H1 (cell line): ENCODE measurements at regions of chr3 and their contacts with region 1.

Region 1: GRCh38 chr3:122969585-122970453 is 57.7 kb downstream of the SEMA5B start:
- DNase-seq: no peak
- H3K4me3 ChIP-seq: no peak overlapping the region
- H3K27ac ChIP-seq: no peak overlapping the region
- H3K4me1 ChIP-seq: peaks cover 0 to 14% (median 9%) of the 10 kb centered on the region in 4 experiments; a peak in 6 of 7 replicates
- H3K27me3 ChIP-seq: no peaks in the 10 kb centered on the region
- CTCF ChIP-seq: no peak
- EP300 ChIP-seq: no peak
- POLR2A ChIP-seq: no peak
- RAD21 ChIP-seq: no peak

Region 2: GRCh38 chr3:122784436-122784835 is 185.4 kb before region 1 on chr3:
- CTCF ChIA-PET with region 1: no interaction called
- POLR2A ChIA-PET with region 1: no interaction called
- DNase-seq: no peak
- H3K4me3 ChIP-seq: no peak overlapping the region
- H3K27ac ChIP-seq: no peak overlapping the region
- H3K4me1 ChIP-seq: no peaks in the 10 kb centered on the region
- H3K27me3 ChIP-seq: no peaks in the 10 kb centered on the region
- CTCF ChIP-seq: no peak
- EP300 ChIP-seq: no peak
- POLR2A ChIP-seq: no peak
- RAD21 ChIP-seq: no peak

Region 3: GRCh38 chr3:122936335-122936734 is 33.5 kb before region 1 on chr3:
- CTCF ChIA-PET with region 1: no interaction called
- POLR2A ChIA-PET with region 1: no interaction called
- DNase-seq: no peak
- H3K4me3 ChIP-seq: no peak overlapping the region
- H3K27ac ChIP-seq: no peak overlapping the region
- H3K4me1 ChIP-seq: no peaks in the 10 kb centered on the region; a peak in 1 of 7 replicates
- H3K27me3 ChIP-seq: no peaks in the 10 kb centered on the region
- CTCF ChIP-seq: no peak
- EP300 ChIP-seq: no peak
- POLR2A ChIP-seq: no peak
- RAD21 ChIP-seq: no peak

Region 4: DNA sequence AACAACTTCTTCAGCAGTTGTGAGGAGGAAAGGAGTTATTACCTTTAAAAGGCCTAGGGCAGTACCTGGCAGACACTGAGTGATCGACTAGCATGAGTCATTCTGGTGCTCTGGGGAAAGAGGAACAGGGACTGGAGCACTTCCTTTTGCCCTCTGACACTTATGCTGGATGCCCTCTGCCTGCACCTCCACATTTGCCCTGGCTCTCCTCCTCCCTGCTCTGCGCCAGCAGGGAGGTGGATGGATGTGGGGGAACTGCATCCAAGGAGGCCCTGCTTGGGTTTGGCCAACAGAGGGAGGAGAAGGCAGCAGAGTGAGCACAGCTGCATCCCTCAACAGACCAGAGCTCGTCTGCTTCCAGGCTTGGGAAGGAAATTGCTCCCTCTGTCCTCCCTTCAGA is 17.3 kb before region 1 on chr3:
- CTCF ChIA-PET with region 1: interaction called, 26 read pairs
- POLR2A ChIA-PET with region 1: interaction called, 6 read pairs
- DNase-seq: no peak
- H3K4me3 ChIP-seq: no peak overlapping the region
- H3K27ac ChIP-seq: no peak overlapping the region
- H3K4me1 ChIP-seq: peaks cover 0 to 20% (median 7%) of the 10 kb centered on the region in 4 experiments; a peak in 5 of 7 replicates
- H3K27me3 ChIP-seq: no peaks in the 10 kb centered on the region
- CTCF ChIP-seq: peak; percentile 45 to 50 (median 47)
- EP300 ChIP-seq: no peak
- POLR2A ChIP-seq: no peak
- RAD21 ChIP-seq: peak; percentile 49 to 62

Region 5: DNA sequence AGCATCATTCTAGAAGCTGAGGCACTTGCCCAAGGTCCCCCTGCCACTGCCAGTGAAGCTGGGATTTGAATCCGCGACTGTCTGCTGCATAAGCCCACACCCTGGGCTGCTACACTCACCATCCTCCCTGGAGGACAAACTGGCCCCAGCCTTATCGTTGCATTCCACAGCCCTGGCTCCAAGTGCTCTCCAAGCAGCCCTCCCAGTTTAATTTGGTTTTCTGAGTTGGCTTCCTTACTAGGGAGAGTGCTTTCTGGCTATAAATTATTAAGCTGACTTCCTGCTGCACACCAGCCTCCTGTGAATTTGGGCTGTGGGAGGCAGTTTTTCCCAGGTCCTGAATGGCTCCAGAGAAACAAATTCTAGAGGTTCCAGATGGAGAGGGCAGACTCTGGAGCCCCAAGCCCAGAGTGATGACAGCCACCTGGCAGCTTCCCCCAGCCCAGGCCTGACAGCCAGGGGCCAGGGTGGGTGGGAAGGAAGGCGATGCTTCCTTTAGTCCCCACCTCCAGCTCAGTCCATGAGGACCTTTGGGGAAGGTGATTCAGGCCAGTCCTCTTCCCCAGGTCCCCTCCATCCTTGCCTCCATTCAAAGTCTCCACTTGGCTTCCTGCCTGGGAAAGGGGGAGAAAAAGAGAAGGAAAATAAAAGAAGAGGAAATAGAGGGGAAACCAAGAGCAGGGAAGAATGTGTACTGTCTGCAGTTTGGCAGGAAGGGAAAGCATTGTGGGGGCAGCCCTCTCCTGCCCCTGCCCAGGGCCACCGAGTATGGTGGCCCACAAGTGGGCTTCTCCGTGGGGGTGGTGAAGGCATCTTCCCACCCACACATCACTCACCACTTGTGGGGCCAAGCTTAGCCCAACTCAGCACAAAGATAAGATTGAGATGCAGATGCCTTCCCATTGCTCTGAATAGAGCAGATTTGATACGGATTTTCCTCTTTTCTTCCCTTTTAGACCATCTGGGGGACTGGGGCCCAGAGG is 11.8 kb before region 1 on chr3:
- CTCF ChIA-PET with region 1: interaction called, 26 read pairs
- POLR2A ChIA-PET with region 1: interaction called, 6 read pairs
- DNase-seq: no peak
- H3K4me3 ChIP-seq: no peak overlapping the region
- H3K27ac ChIP-seq: no peak overlapping the region
- H3K4me1 ChIP-seq: peaks cover 1 to 32% (median 17%) of the 10 kb centered on the region in 4 experiments
- H3K27me3 ChIP-seq: no peaks in the 10 kb centered on the region
- CTCF ChIP-seq: no peak
- EP300 ChIP-seq: no peak
- POLR2A ChIP-seq: no peak
- RAD21 ChIP-seq: no peak

Region 6: GRCh38 chr3:122982216-122983185 is 12.7 kb after region 1 on chr3:
- CTCF ChIA-PET with region 1: interaction called, 11 read pairs
- POLR2A ChIA-PET with region 1: interaction called, 5 read pairs
- DNase-seq: no peak
- H3K4me3 ChIP-seq: no peak overlapping the region
- H3K27ac ChIP-seq: no peak overlapping the region
- H3K4me1 ChIP-seq: peaks cover 16 to 52% (median 36%) of the 10 kb centered on the region in 4 experiments
- H3K27me3 ChIP-seq: no peaks in the 10 kb centered on the region
- CTCF ChIP-seq: peak in 2 of 3 experiments; percentile 40; a peak in 3 of 4 replicates
- EP300 ChIP-seq: no peak
- POLR2A ChIP-seq: no peak
- RAD21 ChIP-seq: peak; percentile 32 to 50